ENCODE measurements at regions of chr21 and their contacts with region 1.

Region 1: GRCh38 chr21:34614633-34615486 is at the start of gene RCAN1:
- DNase-seq: peak; percentile 89 to 94
- ATAC-seq: peak; percentile 98
- H3K4me3 ChIP-seq: peak within 1 kb of the TSS; percentile 56 to 73 (median 63)
- H3K27ac ChIP-seq: peak within 1 kb of the TSS; percentile 80 to 91 (median 88)
- H3K4me1 ChIP-seq: peaks cover 19 to 36% of the 10 kb centered on the region in 2 donors
- H3K27me3 ChIP-seq: no peaks in the 10 kb centered on the region
- CTCF ChIP-seq: peak in 1 of 5 experiments; percentile 13
- POLR2A ChIP-seq: peak; percentile 75 to 80
- total RNA-seq, gene RCAN1: 21.7 to 37.9 (median 33.2) TPM

Region 2: GRCh38 chr21:33915368-33916199 is 699.3 kb before region 1 on chr21 and contains the start of gene ATP5PO:
- in situ Hi-C with region 1: loop called in 2 of 4 experiments (anchors 25 kb)
- intact Hi-C with region 1: loop called (anchors 2 kb)
- DNase-seq: peak; percentile 97 to 98
- ATAC-seq: peak; percentile 95 to 97
- H3K4me3 ChIP-seq: peak within 1 kb of the TSS; percentile 86 to 96 (median 90)
- H3K27ac ChIP-seq: peak within 1 kb of the TSS; percentile 88 to 93 (median 92)
- H3K4me1 ChIP-seq: peaks cover 17 to 26% of the 10 kb centered on the region in 2 donors
- H3K27me3 ChIP-seq: no peaks in the 10 kb centered on the region
- CTCF ChIP-seq: peak in 1 of 5 experiments; percentile 10
- POLR2A ChIP-seq: peak; percentile 82 to 86
- total RNA-seq, gene ATP5PO: 261 to 560 (median 356) TPM

Region 3: DNA sequence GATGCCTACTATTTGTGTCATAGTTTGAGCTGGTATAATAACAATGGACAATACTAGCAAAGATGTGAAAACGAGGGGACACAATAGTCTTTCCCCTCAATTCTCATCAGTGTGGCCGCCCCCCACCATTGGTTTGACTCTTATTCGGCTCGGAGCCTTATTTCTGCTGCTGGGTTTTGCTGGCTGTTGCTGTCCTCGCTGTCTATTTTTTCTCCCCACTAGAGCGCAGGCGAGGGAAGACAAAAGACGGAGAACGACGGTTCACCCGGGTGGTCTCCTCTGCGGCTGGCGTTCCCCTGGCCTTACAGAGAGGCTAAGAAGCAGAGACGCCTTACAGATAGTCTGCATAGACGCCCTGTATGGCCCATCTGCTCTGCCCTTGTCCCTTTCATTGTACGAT is 73.3 kb after region 1 on chr21:
- in situ Hi-C with region 1: no loop called
- intact Hi-C with region 1: loop called (anchors 10 kb)
- DNase-seq: no peak
- ATAC-seq: no peak
- H3K4me3 ChIP-seq: no peak overlapping the region
- H3K27ac ChIP-seq: peak overlapping the region in 1 of 4 donors; percentile 71
- H3K4me1 ChIP-seq: peaks cover 14 to 33% of the 10 kb centered on the region in 2 donors
- H3K27me3 ChIP-seq: no peaks in the 10 kb centered on the region
- CTCF ChIP-seq: no peak
- POLR2A ChIP-seq: no peak

Region 4: GRCh38 chr21:36060159-36060921 is 1445.5 kb after region 1 on chr21 and contains the start of gene SETD4:
- in situ Hi-C with region 1: no loop called
- intact Hi-C with region 1: loop called (anchors 10 kb)
- DNase-seq: peak; percentile 80 to 89
- ATAC-seq: peak; percentile 94
- H3K4me3 ChIP-seq: peak within 1 kb of the TSS; percentile 74 to 95 (median 86)
- H3K27ac ChIP-seq: peak within 1 kb of the TSS; percentile 89 to 95 (median 94)
- H3K4me1 ChIP-seq: peaks cover 22 to 24% of the 10 kb centered on the region in 2 donors
- H3K27me3 ChIP-seq: no peaks in the 10 kb centered on the region
- CTCF ChIP-seq: no peak
- POLR2A ChIP-seq: peak; percentile 71 to 77
- total RNA-seq, gene SETD4: 5.9 to 21.7 (median 16.7) TPM

Measured in gastrocnemius medialis (tissue), 4 donors.